ENCODE measurements at regions of chr4 and their contacts with region 1.

Region 1: GRCh38 chr4:24557026-24558025 is 27.0 kb downstream of the DHX15 start:
- DNase-seq: peak in 2 of 14 experiments; percentile 8 to 23
- ATAC-seq: peak; percentile 61
- H3K4me3 ChIP-seq: no peak overlapping the region
- H3K4me3 Mint-ChIP-seq: peak overlapping the region; percentile 56
- H3K27ac ChIP-seq: no peak overlapping the region
- H3K27ac Mint-ChIP-seq: peak overlapping the region; percentile 75
- H3K4me1 ChIP-seq: no peaks in the 10 kb centered on the region
- H3K4me1 Mint-ChIP-seq: peaks cover 80% of the 10 kb centered on the region
- H3K27me3 ChIP-seq: no peaks in the 10 kb centered on the region
- H3K27me3 Mint-ChIP-seq: no peaks in the 10 kb centered on the region
- CTCF ChIP-seq: no peak

Region 2: GRCh38 chr4:24544208-24544988 is 12.9 kb before region 1 on chr4:
- CTCF ChIA-PET with region 1: interaction called, 3 read pairs
- POLR2A ChIA-PET with region 1: interaction called, 4 read pairs
- intact Hi-C with region 1: loop called in 1 of 2 experiments (anchors 2 kb)
- DNase-seq: no peak
- ATAC-seq: no peak
- H3K4me3 ChIP-seq: no peak overlapping the region
- H3K4me3 Mint-ChIP-seq: no peak overlapping the region
- H3K27ac ChIP-seq: no peak overlapping the region
- H3K27ac Mint-ChIP-seq: peak overlapping the region; percentile 47
- H3K4me1 ChIP-seq: peaks cover 8% of the 10 kb centered on the region
- H3K4me1 Mint-ChIP-seq: peaks cover 55% of the 10 kb centered on the region
- H3K27me3 ChIP-seq: no peaks in the 10 kb centered on the region
- H3K27me3 Mint-ChIP-seq: no peaks in the 10 kb centered on the region
- CTCF ChIP-seq: no peak

Region 3: DNA sequence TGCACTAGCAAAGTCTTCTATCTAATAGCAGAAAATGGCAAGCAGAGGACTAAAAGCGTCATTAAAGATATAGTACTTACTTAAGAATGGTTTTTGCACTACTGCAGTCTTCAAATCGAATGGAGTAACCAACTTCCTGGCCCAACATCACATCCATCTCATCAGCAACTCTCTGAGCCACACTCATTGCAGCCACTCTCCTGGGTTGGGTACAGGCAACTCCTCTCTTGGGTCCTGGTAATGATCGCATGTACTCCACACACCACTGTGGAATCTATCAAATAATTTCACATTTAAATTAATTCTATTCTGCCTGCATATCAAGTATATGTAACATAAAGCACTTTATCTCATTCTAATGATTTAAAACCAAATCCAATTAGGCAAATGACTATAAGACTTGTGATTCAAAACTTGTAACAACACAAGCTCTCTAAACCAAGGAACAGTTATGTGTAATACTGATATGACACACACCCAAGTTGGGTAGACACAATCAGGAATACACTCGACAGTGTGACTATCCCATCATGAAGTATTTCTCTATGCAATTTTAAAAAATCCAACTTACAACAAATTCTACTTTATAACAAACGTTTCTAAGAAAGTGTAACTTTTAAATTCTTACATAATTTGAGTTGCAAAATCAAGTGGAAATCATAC is 13.4 kb after region 1 on chr4:
- CTCF ChIA-PET with region 1: interaction called, 5 read pairs
- POLR2A ChIA-PET with region 1: no interaction called
- intact Hi-C with region 1: loop called in 1 of 2 experiments (anchors 2 kb)
- DNase-seq: no peak
- ATAC-seq: no peak
- H3K4me3 ChIP-seq: no peak overlapping the region
- H3K4me3 Mint-ChIP-seq: peak overlapping the region; percentile 17
- H3K27ac ChIP-seq: no peak overlapping the region
- H3K27ac Mint-ChIP-seq: peak overlapping the region; percentile 60
- H3K4me1 ChIP-seq: peaks cover 23% of the 10 kb centered on the region
- H3K4me1 Mint-ChIP-seq: peaks cover 89% of the 10 kb centered on the region
- H3K27me3 ChIP-seq: no peaks in the 10 kb centered on the region
- H3K27me3 Mint-ChIP-seq: no peaks in the 10 kb centered on the region
- CTCF ChIP-seq: no peak

Region 4: DNA sequence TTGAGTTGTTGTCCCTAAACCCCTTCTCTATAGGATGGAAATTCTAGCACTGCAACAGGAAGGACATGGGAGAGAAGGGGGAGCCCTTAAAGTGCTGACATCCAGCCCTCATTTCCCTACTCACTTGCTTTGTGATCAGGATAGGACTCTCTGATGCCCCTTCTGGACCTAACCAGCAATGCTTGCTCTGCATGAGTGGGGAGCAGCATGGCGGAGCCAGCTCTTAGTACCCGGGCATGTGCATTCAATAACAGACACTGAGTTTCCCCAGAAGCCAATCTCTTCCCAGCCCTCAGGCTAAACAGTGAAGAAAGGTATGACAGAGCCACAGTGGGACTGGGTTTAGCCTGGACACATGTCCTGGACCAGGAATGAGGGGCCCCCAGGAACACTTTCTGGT is 252.1 kb after region 1 on chr4:
- CTCF ChIA-PET with region 1: no interaction called
- POLR2A ChIA-PET with region 1: no interaction called
- intact Hi-C with region 1: no loop called
- DNase-seq: no peak
- ATAC-seq: no peak
- H3K4me3 ChIP-seq: no peak overlapping the region
- H3K4me3 Mint-ChIP-seq: no peak overlapping the region
- H3K27ac ChIP-seq: no peak overlapping the region
- H3K27ac Mint-ChIP-seq: no peak overlapping the region
- H3K4me1 ChIP-seq: no peaks in the 10 kb centered on the region
- H3K4me1 Mint-ChIP-seq: no peaks in the 10 kb centered on the region
- H3K27me3 ChIP-seq: no peaks in the 10 kb centered on the region
- H3K27me3 Mint-ChIP-seq: no peaks in the 10 kb centered on the region
- CTCF ChIP-seq: no peak